Activated B cell treated with CpG ODN at 0.5 μM for 24 hours (primary cell): ENCODE measurements at regions of chr1 and their contacts with region 1.

Region 1: DNA sequence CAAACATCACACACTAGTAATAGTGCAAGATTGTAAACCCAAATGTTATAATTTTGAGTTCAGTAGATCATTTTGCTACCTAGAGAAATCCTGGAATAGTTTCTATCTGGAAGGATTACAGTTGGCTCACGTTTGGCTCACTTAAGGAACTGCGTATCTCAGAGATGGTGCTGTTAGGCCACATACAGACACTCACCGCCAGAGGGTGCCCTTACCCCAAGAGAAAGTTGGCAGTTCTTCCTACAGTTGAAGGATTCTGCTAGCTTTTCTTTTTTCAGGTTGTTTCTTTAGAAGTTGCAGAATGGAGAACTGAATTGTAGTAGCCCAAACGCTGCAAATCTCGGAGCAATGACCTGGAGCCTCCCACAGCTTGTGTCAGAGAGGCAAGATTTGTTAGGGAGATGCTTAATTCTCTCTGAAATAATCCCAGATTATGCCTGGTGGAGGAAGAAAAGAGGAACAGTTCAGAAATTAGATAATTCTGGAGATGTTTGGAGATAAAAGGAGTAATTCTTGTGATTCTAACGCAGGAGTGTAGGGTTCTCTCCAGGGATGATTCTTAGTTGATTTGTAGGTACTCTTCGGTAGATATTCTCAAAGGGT is 87.9 kb upstream of the PAPPA2 start:
- DNase-seq: peak; percentile 22
- ATAC-seq: peak; percentile 49
- H3K4me3 Mint-ChIP-seq: no peak overlapping the region
- H3K27ac Mint-ChIP-seq: no peak overlapping the region
- H3K4me1 Mint-ChIP-seq: no peaks in the 10 kb centered on the region
- H3K27me3 Mint-ChIP-seq: peaks cover 6% of the 10 kb centered on the region
- CTCF ChIP-seq: no peak

Region 2: GRCh38 chr1:176880954-176881595 is 506.0 kb after region 1 on chr1:
- CTCF ChIA-PET with region 1: interaction called, 3 read pairs
- POLR2A ChIA-PET with region 1: no interaction called
- intact Hi-C with region 1: loop called (anchors 2 kb)
- DNase-seq: no peak
- ATAC-seq: no peak
- H3K4me3 Mint-ChIP-seq: no peak overlapping the region
- H3K27ac Mint-ChIP-seq: no peak overlapping the region
- H3K4me1 Mint-ChIP-seq: no peaks in the 10 kb centered on the region
- H3K27me3 Mint-ChIP-seq: peaks cover 5% of the 10 kb centered on the region
- CTCF ChIP-seq: peak; percentile 43